ENCODE measurements at regions of chr2 and their contacts with region 1.

Region 1: DNA sequence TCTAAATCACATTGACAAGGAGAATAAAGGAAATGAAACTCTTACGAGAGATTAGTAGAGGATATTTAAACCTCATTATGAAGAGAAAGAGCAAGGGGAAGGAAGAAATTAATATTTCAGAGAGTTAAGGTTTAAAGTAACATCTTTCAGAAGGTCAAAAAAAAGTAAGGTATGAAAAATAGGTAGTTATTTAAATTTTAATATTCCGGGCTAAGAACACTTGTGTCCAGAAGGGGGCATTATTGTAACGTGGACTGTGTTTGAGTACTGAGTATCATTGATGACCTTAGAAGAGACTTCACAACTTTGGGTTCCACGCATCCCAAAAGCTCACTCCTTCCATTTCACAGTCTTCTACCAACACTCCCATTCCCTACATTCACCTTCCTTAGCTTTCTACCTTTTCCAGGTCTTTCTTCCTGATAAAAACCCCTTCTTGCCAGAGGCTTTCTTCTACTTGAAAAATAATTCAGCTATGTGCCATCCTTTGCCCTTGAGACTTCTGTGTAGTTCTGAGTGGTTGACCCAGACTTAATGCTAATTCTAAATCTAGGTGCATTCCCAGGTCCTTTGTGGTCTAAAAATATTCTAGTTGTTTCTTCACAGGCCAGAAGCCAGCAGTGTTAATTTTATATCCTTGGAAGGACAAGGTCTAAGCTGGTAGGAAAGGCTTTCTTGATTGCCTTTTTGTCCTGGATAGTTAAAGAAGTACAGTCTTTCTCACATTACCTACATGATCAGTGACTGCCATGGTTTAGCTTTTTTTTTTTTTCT is 16.5 kb downstream of the DYNC1I2 start:
- DNase-seq: peak; percentile 35 to 59 (median 44)
- ATAC-seq: peak; percentile 86
- H3K4me3 ChIP-seq: no peak overlapping the region
- H3K27ac ChIP-seq: no peak overlapping the region
- H3K4me1 ChIP-seq: no peaks in the 10 kb centered on the region
- H3K27me3 ChIP-seq: no peaks in the 10 kb centered on the region
- CTCF ChIP-seq: peak; percentile 58 to 78 (median 61)
- EP300 ChIP-seq: no peak
- POLR2A ChIP-seq: no peak
- RAD21 ChIP-seq: peak; percentile 69 to 71

Region 2: DNA sequence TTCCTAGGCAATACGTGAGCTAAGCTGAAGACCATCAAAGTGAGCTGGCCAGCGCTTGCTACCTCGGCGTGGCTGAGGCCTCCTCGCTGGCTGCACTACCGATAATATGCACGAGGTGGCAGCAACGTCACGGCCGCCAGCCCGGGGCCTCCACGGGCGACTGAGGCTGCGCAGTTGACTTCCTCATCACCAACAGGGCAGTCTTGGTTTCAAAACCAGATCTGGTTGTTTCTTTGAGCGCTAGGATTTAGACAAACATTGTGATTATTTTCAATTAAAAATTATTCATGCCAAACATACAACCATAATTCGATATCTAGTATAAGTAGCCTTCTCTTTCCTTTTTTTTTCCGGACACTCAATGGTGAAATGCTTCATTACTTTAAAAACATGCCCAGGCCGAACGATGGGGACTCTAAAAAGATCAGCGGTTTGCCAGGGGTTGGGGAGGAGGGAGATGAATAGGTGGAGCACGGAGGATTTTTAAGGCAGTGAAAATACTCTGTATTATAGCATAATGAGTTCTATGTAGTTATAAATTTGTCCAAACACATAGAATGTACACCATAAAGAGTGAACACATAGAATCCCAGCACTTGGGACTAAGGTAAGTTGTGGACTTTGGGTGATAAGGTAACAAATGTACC is 129.5 kb before region 1 on chr2:
- CTCF ChIA-PET with region 1: interaction called, 8 read pairs
- POLR2A ChIA-PET with region 1: no interaction called
- in situ Hi-C with region 1: no loop called
- intact Hi-C with region 1: loop called (anchors 5 kb)
- DNase-seq: peak; percentile 90 to 99 (median 97)
- ATAC-seq: peak; percentile 99
- H3K4me3 ChIP-seq: no peak overlapping the region
- H3K27ac ChIP-seq: no peak overlapping the region
- H3K4me1 ChIP-seq: peaks cover 0 to 3% of the 10 kb centered on the region in 2 experiments; a peak in 1 of 5 replicates
- H3K27me3 ChIP-seq: no peaks in the 10 kb centered on the region
- CTCF ChIP-seq: peak; percentile 96 to 99 (median 97)
- EP300 ChIP-seq: 0 out of 2 replicates have a peak, but pooled peaks have one; percentile 3
- POLR2A ChIP-seq: no peak
- RAD21 ChIP-seq: peak; percentile 95 to 97

Region 3: DNA sequence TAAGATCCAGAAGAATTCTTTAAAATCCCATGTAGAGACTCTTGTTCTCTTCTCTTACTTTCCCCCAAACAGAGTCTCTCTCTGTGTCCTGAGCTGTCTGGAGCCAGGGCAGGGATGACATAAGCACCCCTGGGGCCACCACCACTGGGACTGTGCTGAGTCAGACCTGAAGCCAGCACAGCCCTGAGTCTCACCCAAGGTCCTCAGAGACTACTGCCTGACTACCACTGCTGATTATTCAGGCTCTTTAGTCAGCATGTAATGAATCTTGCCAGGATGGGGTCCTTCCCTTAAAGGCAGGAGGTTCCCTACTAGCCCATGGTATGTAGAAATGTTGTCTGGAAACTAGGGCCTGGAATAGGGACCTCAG is 51.4 kb before region 1 on chr2:
- CTCF ChIA-PET with region 1: no interaction called
- POLR2A ChIA-PET with region 1: no interaction called
- in situ Hi-C with region 1: no loop called
- intact Hi-C with region 1: no loop called
- DNase-seq: no peak
- ATAC-seq: no peak
- H3K4me3 ChIP-seq: no peak overlapping the region
- H3K27ac ChIP-seq: no peak overlapping the region
- H3K4me1 ChIP-seq: no peaks in the 10 kb centered on the region
- H3K27me3 ChIP-seq: no peaks in the 10 kb centered on the region
- CTCF ChIP-seq: no peak
- EP300 ChIP-seq: no peak
- POLR2A ChIP-seq: no peak
- RAD21 ChIP-seq: no peak

Region 4: GRCh38 chr2:171687287-171688128 is 16.3 kb before region 1 on chr2 and contains the start of gene DYNC1I2:
- CTCF ChIA-PET with region 1: no interaction called
- POLR2A ChIA-PET with region 1: interaction called, 43 read pairs
- in situ Hi-C with region 1: no loop called
- intact Hi-C with region 1: no loop called
- DNase-seq: peak; percentile 87 to 97 (median 88)
- ATAC-seq: peak; percentile 96
- H3K4me3 ChIP-seq: peak within 1 kb of the TSS; percentile 77
- H3K27ac ChIP-seq: peak within 1 kb of the TSS; percentile 88
- H3K4me1 ChIP-seq: peaks cover 0 to 8% of the 10 kb centered on the region in 2 experiments; a peak in 3 of 5 replicates
- H3K27me3 ChIP-seq: no peaks in the 10 kb centered on the region
- CTCF ChIP-seq: no peak; a peak in 1 of 6 replicates
- EP300 ChIP-seq: peak; percentile 5; the same call in 1 of the 2 replicates
- POLR2A ChIP-seq: peak; percentile 90
- RAD21 ChIP-seq: no peak; a peak in 1 of 4 replicates
- polyA plus RNA-seq, gene DYNC1I2: 59.1 to 119 TPM

Region 5: GRCh38 chr2:171893824-171894611 is 190.3 kb after region 1 on chr2 and contains the start of gene SLC25A12:
- CTCF ChIA-PET with region 1: no interaction called
- POLR2A ChIA-PET with region 1: no interaction called
- in situ Hi-C with region 1: no loop called
- intact Hi-C with region 1: loop called (anchors 10 kb)
- DNase-seq: peak; percentile 87 to 95 (median 91)
- ATAC-seq: peak; percentile 97
- H3K4me3 ChIP-seq: peak within 1 kb of the TSS; percentile 79
- H3K27ac ChIP-seq: peak within 1 kb of the TSS; percentile 86
- H3K4me1 ChIP-seq: peaks cover 5 to 12% of the 10 kb centered on the region in 2 experiments; a peak in 3 of 5 replicates
- H3K27me3 ChIP-seq: no peaks in the 10 kb centered on the region
- CTCF ChIP-seq: no peak
- EP300 ChIP-seq: no peak
- POLR2A ChIP-seq: peak; percentile 89
- RAD21 ChIP-seq: no peak
- polyA plus RNA-seq, gene SLC25A12: 18.3 to 31.5 TPM

Region 6: GRCh38 chr2:172102391-172103278 is 398.9 kb after region 1 on chr2 and contains the start of gene DLX2:
- CTCF ChIA-PET with region 1: interaction called, 42 read pairs
- POLR2A ChIA-PET with region 1: interaction called, 4 read pairs
- in situ Hi-C with region 1: loop called (anchors 5 kb)
- intact Hi-C with region 1: loop called (anchors 1 kb)
- DNase-seq: peak; percentile 96 to 97 (median 96)
- ATAC-seq: peak; percentile 80
- H3K4me3 ChIP-seq: peak within 1 kb of the TSS; percentile 63
- H3K27ac ChIP-seq: peak within 1 kb of the TSS; percentile 59
- H3K4me1 ChIP-seq: peaks cover 21 to 69% of the 10 kb centered on the region in 2 experiments
- H3K27me3 ChIP-seq: no peaks in the 10 kb centered on the region; a peak in 1 of 5 replicates
- CTCF ChIP-seq: peak in 2 of 3 experiments; percentile 23 to 32; a peak in 3 of 6 replicates
- EP300 ChIP-seq: no peak
- POLR2A ChIP-seq: peak; percentile 66
- RAD21 ChIP-seq: peak in 1 of 2 experiments; percentile 50; a peak in 2 of 4 replicates
- polyA plus RNA-seq, gene DLX2: 0.49 to 2.1 TPM

Region 7: GRCh38 chr2:172128484-172128883 is 424.7 kb after region 1 on chr2:
- CTCF ChIA-PET with region 1: interaction called, 6 read pairs
- POLR2A ChIA-PET with region 1: interaction called, 5 read pairs
- in situ Hi-C with region 1: no loop called
- intact Hi-C with region 1: loop called (anchors 5 kb)
- DNase-seq: no peak
- ATAC-seq: no peak
- H3K4me3 ChIP-seq: no peak overlapping the region
- H3K27ac ChIP-seq: no peak overlapping the region
- H3K4me1 ChIP-seq: no peaks in the 10 kb centered on the region
- H3K27me3 ChIP-seq: peaks cover 2 to 5% of the 10 kb centered on the region in 2 experiments; a peak in 1 of 5 replicates
- CTCF ChIP-seq: no peak
- EP300 ChIP-seq: no peak
- POLR2A ChIP-seq: no peak
- RAD21 ChIP-seq: no peak

Measured in K562 (cell line).